Common myeloid progenitor, CD34-positive (primary cell): ENCODE measurements at regions of chr11 and their contacts with region 1.

Region 1: DNA sequence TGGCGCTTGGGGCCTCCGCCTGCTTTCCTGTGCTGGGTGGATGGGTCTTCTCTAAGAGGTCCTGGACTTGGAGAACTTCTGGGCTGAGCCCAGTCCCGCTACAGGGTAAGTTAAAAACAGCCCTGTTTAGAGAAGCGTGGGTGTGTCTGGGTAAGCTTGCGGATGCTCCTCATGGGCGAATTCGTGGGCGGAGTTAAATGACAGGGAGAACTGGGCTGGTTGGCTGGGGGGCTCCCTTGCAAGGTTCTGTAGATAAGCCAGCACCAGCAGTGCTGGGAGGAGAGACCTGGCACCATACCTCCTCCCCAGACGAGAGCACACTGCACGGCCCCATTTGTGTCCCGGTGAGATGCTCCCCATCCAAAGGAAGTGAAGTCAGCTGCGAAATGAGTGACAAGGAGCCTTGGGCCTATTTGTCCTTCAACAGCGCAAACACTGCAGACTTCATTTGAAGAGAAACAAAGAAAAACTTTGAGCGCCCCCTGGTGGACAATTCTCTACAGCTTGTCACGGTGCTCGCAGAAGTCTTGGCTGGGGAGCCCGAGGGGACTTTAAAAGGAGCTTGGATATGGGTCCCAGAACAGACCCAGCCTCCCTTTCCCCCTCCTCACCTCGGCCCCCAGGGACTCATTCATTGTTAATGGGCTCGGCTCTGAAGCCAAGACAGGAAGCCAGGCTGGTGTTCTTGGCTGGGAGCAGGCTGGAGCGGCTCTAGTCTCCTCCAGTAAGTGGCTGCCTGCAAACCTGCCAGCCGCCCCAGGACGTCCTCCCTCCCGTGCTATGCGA is 39.5 kb downstream of the TP53I11 start:
- DNase-seq: peak; percentile 83 to 91 (median 85)
- H3K4me3 ChIP-seq: no peak overlapping the region
- H3K27ac ChIP-seq: no peak overlapping the region
- H3K4me1 ChIP-seq: peaks cover 0 to 30% (median 21%) of the 10 kb centered on the region in 4 experiments
- H3K27me3 ChIP-seq: peaks cover 0 to 3% (median 0%) of the 10 kb centered on the region in 5 experiments

Region 2: DNA sequence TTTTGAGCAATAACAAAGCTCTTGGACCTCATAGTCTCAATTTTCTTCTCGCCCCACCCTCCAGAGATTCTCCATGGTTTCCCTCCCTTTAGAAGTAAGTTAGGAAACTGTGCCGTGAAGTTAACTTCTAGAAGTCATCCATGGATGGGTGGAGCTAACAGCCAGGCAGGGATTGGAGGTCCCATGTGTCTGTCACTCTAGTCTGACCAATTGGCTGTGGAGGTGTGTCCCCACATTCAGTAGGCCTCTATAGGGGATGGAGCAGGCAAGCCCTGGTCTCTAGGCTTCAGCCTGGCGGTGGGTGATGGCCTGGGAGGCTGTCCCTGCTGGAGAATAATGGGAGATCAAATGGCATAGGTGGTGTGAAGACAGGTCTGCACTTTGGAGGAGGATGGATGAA is 11.3 kb before region 1 on chr11:
- CTCF ChIA-PET with region 1: interaction called, 21 read pairs
- POLR2A ChIA-PET with region 1: no interaction called
- DNase-seq: peak; percentile 64 to 81 (median 81)
- H3K4me3 ChIP-seq: no peak overlapping the region
- H3K27ac ChIP-seq: no peak overlapping the region
- H3K4me1 ChIP-seq: no peaks in the 10 kb centered on the region
- H3K27me3 ChIP-seq: peaks cover 0 to 2% (median 0%) of the 10 kb centered on the region in 5 experiments

Region 3: GRCh38 chr11:44927174-44927661 is 16.0 kb after region 1 on chr11:
- CTCF ChIA-PET with region 1: interaction called, 12 read pairs
- POLR2A ChIA-PET with region 1: interaction called, 3 read pairs
- DNase-seq: peak in 2 of 3 donors; percentile 59 to 60
- H3K4me3 ChIP-seq: no peak overlapping the region
- H3K27ac ChIP-seq: no peak overlapping the region
- H3K4me1 ChIP-seq: peaks cover 0 to 6% (median 3%) of the 10 kb centered on the region in 4 experiments
- H3K27me3 ChIP-seq: peaks cover 0 to 1% (median 0%) of the 10 kb centered on the region in 5 experiments

Region 4: GRCh38 chr11:45073685-45074141 is 162.5 kb after region 1 on chr11:
- CTCF ChIA-PET with region 1: no interaction called
- POLR2A ChIA-PET with region 1: no interaction called
- DNase-seq: peak in 2 of 3 donors; percentile 66 to 78
- H3K4me3 ChIP-seq: no peak overlapping the region
- H3K27ac ChIP-seq: no peak overlapping the region
- H3K4me1 ChIP-seq: peaks cover 0 to 33% (median 17%) of the 10 kb centered on the region in 4 experiments
- H3K27me3 ChIP-seq: no peaks in the 10 kb centered on the region